CD4-positive, alpha-beta memory T cell (primary cell): ENCODE measurements at regions of chr18 and their contacts with region 1.

Region 1: GRCh38 chr18:76398896-76399612 is 96.0 kb downstream of the ZNF516 start:
- DNase-seq: peak; percentile 54 to 65 (median 57)
- H3K4me3 ChIP-seq: no peak overlapping the region
- H3K4me3 Mint-ChIP-seq: peak overlapping the region in 1 of 8 donors; percentile 51
- H3K27ac ChIP-seq: no peak overlapping the region
- H3K27ac Mint-ChIP-seq: no peak overlapping the region
- H3K4me1 ChIP-seq: peaks cover 6% of the 10 kb centered on the region
- H3K4me1 Mint-ChIP-seq: peaks cover 3 to 6% (median 5%) of the 10 kb centered on the region in 4 donors
- H3K27me3 ChIP-seq: no peaks in the 10 kb centered on the region
- H3K27me3 Mint-ChIP-seq: peaks cover 0 to 2% of the 10 kb centered on the region in 2 donors

Region 2: DNA sequence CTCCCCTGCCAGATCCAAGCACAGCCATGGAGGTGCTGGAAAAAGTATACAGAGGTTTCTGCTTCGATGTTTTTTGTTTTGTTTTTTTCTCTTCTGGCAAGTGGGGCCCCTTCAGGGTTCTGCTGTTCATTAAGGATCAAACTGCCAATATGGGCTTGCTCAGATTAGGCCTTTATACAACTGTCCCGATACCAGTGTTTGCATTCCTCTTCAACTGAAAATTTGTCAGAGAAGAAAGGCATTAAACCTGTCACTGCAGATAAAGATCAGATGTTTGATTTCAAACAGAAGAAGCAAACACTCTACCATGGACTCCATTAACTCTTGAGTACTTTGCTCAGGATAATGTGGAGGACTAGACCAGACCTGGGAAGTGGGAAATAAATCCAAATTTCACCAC is 575.6 kb before region 1 on chr18:
- CTCF ChIA-PET with region 1: no interaction called
- POLR2A ChIA-PET with region 1: no interaction called
- intact Hi-C with region 1: no loop called
- DNase-seq: no peak
- H3K4me3 ChIP-seq: no peak overlapping the region
- H3K4me3 Mint-ChIP-seq: no peak overlapping the region
- H3K27ac ChIP-seq: no peak overlapping the region
- H3K27ac Mint-ChIP-seq: no peak overlapping the region
- H3K4me1 ChIP-seq: no peaks in the 10 kb centered on the region
- H3K4me1 Mint-ChIP-seq: no peaks in the 10 kb centered on the region
- H3K27me3 ChIP-seq: no peaks in the 10 kb centered on the region
- H3K27me3 Mint-ChIP-seq: peaks cover 1 to 7% of the 10 kb centered on the region in 2 donors

Region 3: DNA sequence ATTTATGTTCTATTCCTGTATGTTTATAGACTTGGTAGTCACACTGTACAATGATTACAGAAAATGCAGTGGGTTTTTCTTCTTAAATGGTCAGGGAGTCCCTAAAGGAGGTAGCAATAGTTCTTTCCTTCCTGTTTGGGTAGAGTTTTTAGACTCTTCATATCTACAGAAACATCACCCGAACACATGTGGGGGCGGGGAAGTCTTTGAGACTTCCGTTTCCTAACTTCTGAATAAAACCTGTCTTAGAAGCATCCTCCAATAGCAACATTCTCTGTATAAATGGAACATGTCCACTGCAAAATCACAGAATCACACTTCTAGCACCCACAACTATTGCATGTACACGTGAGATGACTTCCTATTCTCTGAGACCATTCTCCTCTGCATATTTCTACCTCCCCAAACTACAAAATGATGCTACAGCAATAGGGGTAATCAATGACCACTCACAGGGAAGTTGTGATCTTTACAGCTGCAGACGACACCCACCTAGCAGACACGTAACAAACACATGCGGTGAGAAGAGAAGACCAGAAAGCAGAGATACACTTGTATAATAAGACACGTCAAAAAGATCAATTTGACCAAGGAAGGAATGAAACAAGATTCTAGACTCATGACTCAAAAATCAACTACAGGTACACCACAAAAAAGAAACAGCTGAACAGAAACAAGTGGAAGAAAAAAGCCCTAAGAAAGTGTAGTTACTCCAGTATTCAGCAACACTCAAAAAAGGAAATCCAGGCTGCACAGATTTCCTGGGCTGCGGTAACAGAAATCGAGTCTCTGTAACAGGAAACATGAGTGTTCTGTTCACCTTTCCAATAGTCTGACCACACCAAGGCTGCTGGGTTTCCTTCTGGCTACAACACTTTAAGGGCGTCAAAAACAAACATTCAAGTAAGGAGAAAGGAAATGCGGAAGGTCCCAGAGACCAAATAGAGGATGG is 24.4 kb before region 1 on chr18:
- CTCF ChIA-PET with region 1: interaction called, 14 read pairs
- POLR2A ChIA-PET with region 1: no interaction called
- intact Hi-C with region 1: no loop called
- DNase-seq: peak in 4 of 5 donors; percentile 14 to 31 (median 20)
- H3K4me3 ChIP-seq: peak overlapping the region in 1 of 2 donors; percentile 10
- H3K4me3 Mint-ChIP-seq: peak overlapping the region; percentile 11 to 76 (median 66)
- H3K27ac ChIP-seq: no peak overlapping the region
- H3K27ac Mint-ChIP-seq: peak overlapping the region; percentile 1 to 88 (median 68)
- H3K4me1 ChIP-seq: peaks cover 39% of the 10 kb centered on the region
- H3K4me1 Mint-ChIP-seq: peaks cover 31 to 49% (median 41%) of the 10 kb centered on the region in 4 donors
- H3K27me3 ChIP-seq: no peaks in the 10 kb centered on the region
- H3K27me3 Mint-ChIP-seq: no peaks in the 10 kb centered on the region

Region 4: GRCh38 chr18:76410660-76411417 is 11.8 kb after region 1 on chr18:
- CTCF ChIA-PET with region 1: interaction called, 29 read pairs
- POLR2A ChIA-PET with region 1: no interaction called
- intact Hi-C with region 1: no loop called
- DNase-seq: no peak
- H3K4me3 ChIP-seq: no peak overlapping the region
- H3K4me3 Mint-ChIP-seq: peak overlapping the region in 1 of 8 donors; percentile 5
- H3K27ac ChIP-seq: no peak overlapping the region
- H3K27ac Mint-ChIP-seq: peak overlapping the region in 2 of 7 donors; percentile 1 to 53
- H3K4me1 ChIP-seq: peaks cover 10% of the 10 kb centered on the region
- H3K4me1 Mint-ChIP-seq: peaks cover 0 to 27% (median 7%) of the 10 kb centered on the region in 4 donors
- H3K27me3 ChIP-seq: no peaks in the 10 kb centered on the region
- H3K27me3 Mint-ChIP-seq: peaks cover 3 to 4% of the 10 kb centered on the region in 2 donors

Region 5: GRCh38 chr18:76416911-76417310 is 17.9 kb after region 1 on chr18:
- CTCF ChIA-PET with region 1: interaction called, 12 read pairs
- POLR2A ChIA-PET with region 1: no interaction called
- intact Hi-C with region 1: no loop called
- DNase-seq: no peak
- H3K4me3 ChIP-seq: no peak overlapping the region
- H3K4me3 Mint-ChIP-seq: no peak overlapping the region
- H3K27ac ChIP-seq: no peak overlapping the region
- H3K27ac Mint-ChIP-seq: no peak overlapping the region
- H3K4me1 ChIP-seq: no peaks in the 10 kb centered on the region
- H3K4me1 Mint-ChIP-seq: peaks cover 0 to 4% (median under 1%) of the 10 kb centered on the region in 4 donors
- H3K27me3 ChIP-seq: no peaks in the 10 kb centered on the region
- H3K27me3 Mint-ChIP-seq: peaks cover 1 to 3% of the 10 kb centered on the region in 2 donors

Region 6: GRCh38 chr18:76620321-76621170 is 221.5 kb after region 1 on chr18:
- CTCF ChIA-PET with region 1: interaction called, 3 read pairs
- POLR2A ChIA-PET with region 1: no interaction called
- intact Hi-C with region 1: loop called (anchors 1 kb)
- DNase-seq: peak in 1 of 5 donors; percentile 2
- H3K4me3 ChIP-seq: no peak overlapping the region
- H3K4me3 Mint-ChIP-seq: peak overlapping the region in 4 of 8 donors; percentile 9 to 60 (median 32)
- H3K27ac ChIP-seq: no peak overlapping the region
- H3K27ac Mint-ChIP-seq: no peak overlapping the region
- H3K4me1 ChIP-seq: no peaks in the 10 kb centered on the region
- H3K4me1 Mint-ChIP-seq: peaks cover 0 to 9% (median 3%) of the 10 kb centered on the region in 4 donors
- H3K27me3 ChIP-seq: peaks cover 4% of the 10 kb centered on the region
- H3K27me3 Mint-ChIP-seq: peaks cover 25 to 48% of the 10 kb centered on the region in 2 donors

Region 7: GRCh38 chr18:76709659-76710645 is 310.9 kb after region 1 on chr18:
- CTCF ChIA-PET with region 1: interaction called, 230 read pairs
- POLR2A ChIA-PET with region 1: interaction called, 6 read pairs
- intact Hi-C with region 1: no loop called
- DNase-seq: peak; percentile 50 to 60 (median 57)
- H3K4me3 ChIP-seq: no peak overlapping the region
- H3K4me3 Mint-ChIP-seq: peak overlapping the region in 2 of 8 donors; percentile 16 to 26
- H3K27ac ChIP-seq: no peak overlapping the region
- H3K27ac Mint-ChIP-seq: peak overlapping the region in 2 of 7 donors; percentile 2 to 13
- H3K4me1 ChIP-seq: peaks cover 3% of the 10 kb centered on the region
- H3K4me1 Mint-ChIP-seq: peaks cover 0 to 6% (median 3%) of the 10 kb centered on the region in 4 donors
- H3K27me3 ChIP-seq: no peaks in the 10 kb centered on the region
- H3K27me3 Mint-ChIP-seq: peaks cover 1 to 2% of the 10 kb centered on the region in 2 donors

Region 8: GRCh38 chr18:76721207-76721996 is 322.3 kb after region 1 on chr18:
- CTCF ChIA-PET with region 1: interaction called, 13 read pairs
- POLR2A ChIA-PET with region 1: no interaction called
- intact Hi-C with region 1: no loop called
- DNase-seq: peak; percentile 73 to 83 (median 80)
- H3K4me3 ChIP-seq: peak overlapping the region in 1 of 2 donors; percentile 27
- H3K4me3 Mint-ChIP-seq: peak overlapping the region; percentile 43 to 86 (median 76)
- H3K27ac ChIP-seq: no peak overlapping the region
- H3K27ac Mint-ChIP-seq: peak overlapping the region; percentile 67 to 88 (median 82)
- H3K4me1 ChIP-seq: peaks cover 53% of the 10 kb centered on the region
- H3K4me1 Mint-ChIP-seq: peaks cover 33 to 63% (median 48%) of the 10 kb centered on the region in 4 donors
- H3K27me3 ChIP-seq: no peaks in the 10 kb centered on the region
- H3K27me3 Mint-ChIP-seq: no peaks in the 10 kb centered on the region

Region 9: DNA sequence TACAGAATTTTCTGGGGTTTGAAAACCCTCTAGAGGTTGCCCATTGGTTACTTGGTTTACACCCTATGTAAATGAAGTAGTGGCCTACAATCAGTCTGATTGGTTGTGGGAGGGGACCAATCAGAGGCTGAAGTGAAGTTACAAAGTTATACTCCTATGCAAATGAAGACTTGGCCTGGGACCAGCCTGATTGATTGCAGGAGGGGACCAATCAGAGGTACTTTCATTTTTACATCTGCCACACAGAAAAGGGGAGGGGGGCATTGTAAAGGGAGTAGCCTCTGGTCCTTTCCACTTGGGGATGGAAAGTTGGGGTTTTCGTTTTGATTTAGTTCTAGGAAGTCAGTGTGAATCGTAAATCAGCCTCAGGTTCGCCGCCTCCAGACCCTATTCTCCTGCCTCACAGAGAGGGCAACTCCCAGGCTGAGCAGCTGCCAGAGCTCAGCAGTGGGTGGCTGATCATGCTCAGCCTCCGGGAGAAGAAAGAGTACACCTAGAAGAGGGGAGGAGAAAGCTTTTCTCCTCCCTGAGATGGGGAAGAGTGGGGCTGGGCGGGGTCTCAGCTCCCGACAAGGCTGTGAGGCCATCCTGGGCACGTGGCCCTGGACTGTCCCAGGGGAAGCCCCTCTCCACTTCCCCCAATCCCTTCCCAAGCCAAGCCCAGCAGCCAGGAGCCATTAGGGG is 1223.1 kb after region 1 on chr18:
- CTCF ChIA-PET with region 1: no interaction called
- POLR2A ChIA-PET with region 1: no interaction called
- intact Hi-C with region 1: no loop called
- DNase-seq: peak; percentile 32 to 45 (median 34)
- H3K4me3 ChIP-seq: no peak overlapping the region
- H3K4me3 Mint-ChIP-seq: peak overlapping the region; percentile 65 to 87 (median 80)
- H3K27ac ChIP-seq: no peak overlapping the region
- H3K27ac Mint-ChIP-seq: peak overlapping the region in 6 of 7 donors; percentile 42 to 85 (median 56)
- H3K4me1 ChIP-seq: peaks cover 10% of the 10 kb centered on the region
- H3K4me1 Mint-ChIP-seq: peaks cover 6 to 13% (median 10%) of the 10 kb centered on the region in 4 donors
- H3K27me3 ChIP-seq: no peaks in the 10 kb centered on the region
- H3K27me3 Mint-ChIP-seq: peaks cover 0 to 8% of the 10 kb centered on the region in 2 donors